Activated CD4-positive, alpha-beta memory T cell treated with anti-CD3 and anti-CD28 coated beads for 36 hours (primary cell): ENCODE measurements at regions of chr2 and their contacts with region 1.

Region 1: GRCh38 chr2:161160226-161161069 is at the start of gene TANK:
- DNase-seq: peak; percentile 96
- H3K4me3 Mint-ChIP-seq: peak within 1 kb of the TSS; percentile 96
- H3K27ac Mint-ChIP-seq: peak within 1 kb of the TSS; percentile 98
- H3K4me1 Mint-ChIP-seq: peaks cover 55% of the 10 kb centered on the region
- H3K27me3 Mint-ChIP-seq: no peaks in the 10 kb centered on the region
- total RNA-seq, gene TANK: 71.4 to 74.1 TPM

Region 2: DNA sequence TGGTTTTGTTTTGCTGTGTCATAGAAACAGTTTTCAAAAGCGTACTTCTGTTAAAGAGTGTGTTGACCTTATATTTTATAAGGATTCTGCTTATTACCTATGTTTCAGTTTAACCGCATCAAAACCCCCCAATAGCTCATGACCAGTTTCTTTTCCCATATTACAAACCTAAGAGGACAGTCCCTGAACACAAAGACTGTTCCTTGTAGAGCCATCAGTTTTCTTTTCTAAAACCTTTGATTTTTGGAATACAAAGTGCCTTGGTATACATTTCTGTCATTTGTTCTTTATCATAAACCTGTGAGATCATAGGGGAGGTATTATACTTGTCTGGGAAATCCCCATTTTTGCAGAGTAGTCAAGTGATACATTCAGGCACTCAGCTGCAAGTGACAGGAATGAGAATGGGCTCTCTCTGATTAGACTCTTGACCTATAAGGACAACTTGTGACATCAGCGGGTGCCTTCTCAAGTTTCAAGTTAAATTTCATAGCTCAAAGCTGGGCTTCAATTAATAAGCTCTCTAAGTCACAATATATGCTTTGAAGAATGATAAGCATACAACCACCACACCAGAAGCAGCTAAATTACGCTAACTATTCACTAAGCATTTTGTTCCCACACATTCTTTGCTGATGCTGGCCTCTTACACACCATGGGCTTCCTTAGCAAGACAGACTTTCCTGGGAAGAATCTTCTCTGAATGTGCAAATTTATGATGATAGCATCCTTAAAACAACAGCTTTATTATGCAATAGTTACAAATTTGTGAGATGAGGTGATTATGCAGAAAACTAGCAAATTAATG is 1265.0 kb before region 1 on chr2:
- CTCF ChIA-PET with region 1: no interaction called
- POLR2A ChIA-PET with region 1: no interaction called
- intact Hi-C with region 1: loop called (anchors 10 kb)
- DNase-seq: peak; percentile 47
- H3K4me3 Mint-ChIP-seq: peak overlapping the region; percentile 50
- H3K27ac Mint-ChIP-seq: peak overlapping the region; percentile 89
- H3K4me1 Mint-ChIP-seq: peaks cover 94% of the 10 kb centered on the region
- H3K27me3 Mint-ChIP-seq: no peaks in the 10 kb centered on the region

Region 3: DNA sequence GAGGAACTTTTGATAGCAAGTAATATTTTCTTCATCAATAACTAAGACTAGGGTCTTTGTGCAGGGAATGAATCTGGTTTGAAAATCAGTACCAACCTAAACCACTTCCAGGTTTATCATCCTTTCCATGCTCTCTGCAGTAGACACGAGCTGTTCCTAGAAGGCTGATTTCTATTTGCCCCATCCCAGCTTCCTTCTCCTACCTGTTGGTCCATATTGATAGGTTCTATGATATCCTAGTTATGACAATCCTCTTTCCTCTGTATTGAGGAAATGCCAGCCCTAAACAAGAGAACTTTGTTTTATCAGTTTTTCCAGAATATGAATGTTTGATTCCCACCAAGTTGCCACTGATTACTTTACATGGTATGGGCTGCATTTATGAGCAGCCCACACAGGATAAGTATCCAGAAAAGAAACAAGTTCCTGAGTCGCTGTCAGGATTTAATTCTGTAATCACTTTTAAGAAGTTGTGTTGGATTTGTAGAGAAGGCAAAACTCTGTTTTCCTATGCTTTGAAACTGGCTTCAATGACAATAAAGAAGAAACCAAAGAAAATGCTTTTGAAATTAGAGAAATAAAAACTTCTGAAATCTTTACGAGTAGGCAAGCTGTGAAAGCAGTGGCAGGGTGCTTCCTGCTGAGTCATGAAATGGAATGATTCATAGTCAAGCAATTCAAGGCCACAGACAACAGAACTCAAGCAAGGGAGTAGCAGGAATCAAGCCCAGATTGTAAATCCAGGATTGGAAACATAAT is 37.5 kb before region 1 on chr2:
- CTCF ChIA-PET with region 1: no interaction called
- POLR2A ChIA-PET with region 1: no interaction called
- intact Hi-C with region 1: loop called (anchors 1 kb)
- DNase-seq: peak; percentile 62
- H3K4me3 Mint-ChIP-seq: peak overlapping the region; percentile 17
- H3K27ac Mint-ChIP-seq: peak overlapping the region; percentile 58
- H3K4me1 Mint-ChIP-seq: peaks cover 24% of the 10 kb centered on the region
- H3K27me3 Mint-ChIP-seq: no peaks in the 10 kb centered on the region

Region 4: DNA sequence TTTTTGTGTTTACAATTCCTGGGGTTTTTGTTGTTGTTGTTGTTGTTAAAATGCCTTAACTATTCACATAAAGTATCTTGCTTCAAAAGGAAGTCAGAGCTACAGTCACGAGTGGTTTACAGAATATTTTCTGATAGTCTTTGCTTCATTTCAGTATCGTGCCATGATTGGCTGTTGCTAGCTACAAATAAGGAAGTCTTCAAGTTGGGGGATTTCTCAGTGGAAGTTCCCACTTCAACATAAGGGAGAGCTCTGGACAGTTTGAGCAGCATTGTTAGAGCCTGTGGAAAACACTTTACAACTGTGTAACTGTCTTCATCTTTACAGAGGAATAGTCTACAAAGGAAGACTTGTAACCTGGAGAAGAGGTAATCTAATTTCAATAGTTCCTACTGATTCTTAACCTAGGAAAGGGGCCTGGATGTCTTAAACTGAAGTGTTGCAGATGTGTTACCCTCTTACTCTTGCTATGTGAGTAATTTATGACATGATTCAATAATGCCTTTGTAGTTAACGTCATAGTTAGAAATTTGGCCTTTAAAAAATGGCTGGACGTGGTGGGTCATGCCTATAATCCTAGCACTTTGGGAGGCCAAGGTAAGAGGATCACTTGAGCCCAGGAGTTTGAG is 23.6 kb before region 1 on chr2:
- CTCF ChIA-PET with region 1: interaction called, 3 read pairs
- POLR2A ChIA-PET with region 1: interaction called, 10 read pairs
- intact Hi-C with region 1: loop called (anchors 1 kb)
- DNase-seq: peak; percentile 35
- H3K4me3 Mint-ChIP-seq: peak overlapping the region; percentile 96
- H3K27ac Mint-ChIP-seq: peak overlapping the region; percentile 100
- H3K4me1 Mint-ChIP-seq: peaks cover 45% of the 10 kb centered on the region
- H3K27me3 Mint-ChIP-seq: no peaks in the 10 kb centered on the region

Region 5: GRCh38 chr2:161199912-161200701 is 39.7 kb after region 1 on chr2:
- CTCF ChIA-PET with region 1: no interaction called
- POLR2A ChIA-PET with region 1: no interaction called
- intact Hi-C with region 1: loop called (anchors 2 kb)
- DNase-seq: no peak
- H3K4me3 Mint-ChIP-seq: peak overlapping the region; percentile 67
- H3K27ac Mint-ChIP-seq: peak overlapping the region; percentile 86
- H3K4me1 Mint-ChIP-seq: peaks cover 36% of the 10 kb centered on the region
- H3K27me3 Mint-ChIP-seq: no peaks in the 10 kb centered on the region

Region 6: GRCh38 chr2:161308178-161308955 is 147.9 kb after region 1 on chr2 and contains the start of gene PSMD14:
- CTCF ChIA-PET with region 1: no interaction called
- POLR2A ChIA-PET with region 1: no interaction called
- intact Hi-C with region 1: loop called (anchors 1 kb)
- DNase-seq: peak; percentile 96
- H3K4me3 Mint-ChIP-seq: peak within 1 kb of the TSS; percentile 91
- H3K27ac Mint-ChIP-seq: peak within 1 kb of the TSS; percentile 92
- H3K4me1 Mint-ChIP-seq: peaks cover 37% of the 10 kb centered on the region
- H3K27me3 Mint-ChIP-seq: no peaks in the 10 kb centered on the region
- total RNA-seq, gene PSMD14: 84.2 to 89.8 TPM

Region 7: DNA sequence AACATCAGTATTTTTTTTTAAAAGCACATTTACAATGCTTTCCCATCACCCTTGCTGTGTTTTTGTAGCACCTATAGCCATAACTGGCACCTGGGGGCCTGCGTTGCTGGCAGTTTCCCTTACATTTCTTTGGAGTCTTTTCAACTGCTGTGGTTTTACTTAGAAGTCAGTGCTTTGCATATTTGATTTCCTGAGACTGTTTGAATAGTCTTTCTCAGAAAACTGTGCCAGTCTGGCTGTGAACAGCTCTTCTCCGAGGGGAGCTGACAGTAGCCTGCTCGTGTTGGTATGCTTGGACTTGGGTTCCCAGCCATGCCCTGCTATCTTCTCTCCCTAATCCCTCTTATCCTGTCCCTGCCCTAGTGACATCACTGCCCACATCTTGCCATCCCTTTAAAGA is 832.1 kb after region 1 on chr2:
- CTCF ChIA-PET with region 1: no interaction called
- POLR2A ChIA-PET with region 1: no interaction called
- intact Hi-C with region 1: loop called (anchors 10 kb)
- DNase-seq: peak; percentile 77
- H3K4me3 Mint-ChIP-seq: peak overlapping the region; percentile 73
- H3K27ac Mint-ChIP-seq: peak overlapping the region; percentile 92
- H3K4me1 Mint-ChIP-seq: peaks cover 61% of the 10 kb centered on the region
- H3K27me3 Mint-ChIP-seq: no peaks in the 10 kb centered on the region